Activated CD8-positive, alpha-beta memory T cell treated with anti-CD3 and anti-CD28 coated beads, Interleukin-2, amount 10 ng/mL, durations not matched to agents 7 days and 5 days (primary cell): ENCODE measurements at regions of chr17 and their contacts with region 1.

Region 1: GRCh38 chr17:3738562-3739295 is 15.0 kb downstream of the HASPIN start:
- DNase-seq: peak; percentile 80
- ATAC-seq: peak; percentile 63
- H3K4me3 Mint-ChIP-seq: no peak overlapping the region
- H3K27ac Mint-ChIP-seq: peak overlapping the region; percentile 34
- H3K4me1 Mint-ChIP-seq: peaks cover 58% of the 10 kb centered on the region
- H3K27me3 Mint-ChIP-seq: no peaks in the 10 kb centered on the region

Region 2: GRCh38 chr17:3610523-3610922 is 128.2 kb before region 1 on chr17:
- CTCF ChIA-PET with region 1: no interaction called
- DNase-seq: no peak
- ATAC-seq: no peak
- H3K4me3 Mint-ChIP-seq: no peak overlapping the region
- H3K27ac Mint-ChIP-seq: no peak overlapping the region
- H3K4me1 Mint-ChIP-seq: no peaks in the 10 kb centered on the region
- H3K27me3 Mint-ChIP-seq: no peaks in the 10 kb centered on the region

Region 3: DNA sequence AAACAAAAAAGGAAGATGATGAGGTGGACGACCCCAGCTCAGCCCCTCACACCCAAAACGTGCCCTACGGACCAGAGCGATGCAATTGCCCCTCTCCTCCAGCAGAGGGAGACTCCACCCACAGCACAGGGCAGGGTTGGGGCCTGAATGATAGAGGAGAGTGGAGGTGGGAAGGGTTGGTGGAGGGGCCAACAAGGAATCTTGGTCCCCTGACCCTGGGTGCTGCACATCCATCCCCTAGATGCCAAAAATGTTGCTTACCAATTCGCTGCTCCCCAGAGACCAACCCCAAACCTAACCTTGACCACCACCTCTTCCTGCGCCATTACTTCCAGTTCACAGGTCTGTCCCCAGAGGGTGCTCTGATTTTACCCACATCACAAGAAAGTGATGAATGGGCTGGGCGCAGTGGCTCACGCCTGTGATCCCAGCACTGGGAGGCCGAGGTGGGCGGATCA is 55.6 kb before region 1 on chr17:
- CTCF ChIA-PET with region 1: interaction called, 51 read pairs
- DNase-seq: peak; percentile 74
- ATAC-seq: peak; percentile 92
- H3K4me3 Mint-ChIP-seq: no peak overlapping the region
- H3K27ac Mint-ChIP-seq: no peak overlapping the region
- H3K4me1 Mint-ChIP-seq: peaks cover 11% of the 10 kb centered on the region
- H3K27me3 Mint-ChIP-seq: no peaks in the 10 kb centered on the region

Region 4: GRCh38 chr17:3723556-3724369 is 15.0 kb before region 1 on chr17 and contains the start of gene HASPIN:
- CTCF ChIA-PET with region 1: interaction called, 41 read pairs
- DNase-seq: peak; percentile 94
- ATAC-seq: peak; percentile 94
- H3K4me3 Mint-ChIP-seq: peak within 1 kb of the TSS; percentile 95
- H3K27ac Mint-ChIP-seq: peak within 1 kb of the TSS; percentile 89
- H3K4me1 Mint-ChIP-seq: peaks cover 63% of the 10 kb centered on the region
- H3K27me3 Mint-ChIP-seq: no peaks in the 10 kb centered on the region
- total RNA-seq, gene HASPIN: 30.4 to 31.2 TPM

Region 5: DNA sequence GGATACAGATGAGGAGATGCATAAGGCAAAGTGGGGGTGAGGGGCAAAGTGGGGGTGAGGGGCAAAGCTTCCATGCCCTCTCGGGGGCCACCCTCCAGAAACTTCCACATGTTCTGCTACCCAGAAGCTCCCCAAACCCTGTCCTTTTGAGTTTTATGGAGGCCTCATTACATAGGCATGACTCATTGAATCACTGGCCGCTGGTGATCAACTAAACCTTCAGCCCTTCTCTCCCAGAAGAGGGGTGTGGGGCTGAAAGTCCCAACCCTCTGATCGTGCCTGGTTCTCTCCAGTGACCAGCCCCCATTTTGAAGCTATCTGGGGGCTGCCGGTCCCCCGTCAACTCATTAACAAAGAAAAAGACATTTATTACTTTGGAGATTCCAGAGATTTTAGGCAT is 34.8 kb after region 1 on chr17:
- CTCF ChIA-PET with region 1: interaction called, 19 read pairs
- DNase-seq: no peak
- ATAC-seq: no peak
- H3K4me3 Mint-ChIP-seq: no peak overlapping the region
- H3K27ac Mint-ChIP-seq: peak overlapping the region; percentile 38
- H3K4me1 Mint-ChIP-seq: peaks cover 42% of the 10 kb centered on the region
- H3K27me3 Mint-ChIP-seq: no peaks in the 10 kb centered on the region

Region 6: GRCh38 chr17:3796110-3796821 is 57.5 kb after region 1 on chr17:
- CTCF ChIA-PET with region 1: interaction called, 31 read pairs
- DNase-seq: peak; percentile 99
- ATAC-seq: peak; percentile 64
- H3K4me3 Mint-ChIP-seq: peak overlapping the region; percentile 81
- H3K27ac Mint-ChIP-seq: peak overlapping the region; percentile 86
- H3K4me1 Mint-ChIP-seq: peaks cover 85% of the 10 kb centered on the region
- H3K27me3 Mint-ChIP-seq: peaks cover 6% of the 10 kb centered on the region

Region 7: GRCh38 chr17:3821101-3821500 is 82.4 kb after region 1 on chr17:
- CTCF ChIA-PET with region 1: interaction called, 283 read pairs
- DNase-seq: no peak
- ATAC-seq: no peak
- H3K4me3 Mint-ChIP-seq: no peak overlapping the region
- H3K27ac Mint-ChIP-seq: no peak overlapping the region
- H3K4me1 Mint-ChIP-seq: peaks cover 10% of the 10 kb centered on the region
- H3K27me3 Mint-ChIP-seq: no peaks in the 10 kb centered on the region

Region 8: DNA sequence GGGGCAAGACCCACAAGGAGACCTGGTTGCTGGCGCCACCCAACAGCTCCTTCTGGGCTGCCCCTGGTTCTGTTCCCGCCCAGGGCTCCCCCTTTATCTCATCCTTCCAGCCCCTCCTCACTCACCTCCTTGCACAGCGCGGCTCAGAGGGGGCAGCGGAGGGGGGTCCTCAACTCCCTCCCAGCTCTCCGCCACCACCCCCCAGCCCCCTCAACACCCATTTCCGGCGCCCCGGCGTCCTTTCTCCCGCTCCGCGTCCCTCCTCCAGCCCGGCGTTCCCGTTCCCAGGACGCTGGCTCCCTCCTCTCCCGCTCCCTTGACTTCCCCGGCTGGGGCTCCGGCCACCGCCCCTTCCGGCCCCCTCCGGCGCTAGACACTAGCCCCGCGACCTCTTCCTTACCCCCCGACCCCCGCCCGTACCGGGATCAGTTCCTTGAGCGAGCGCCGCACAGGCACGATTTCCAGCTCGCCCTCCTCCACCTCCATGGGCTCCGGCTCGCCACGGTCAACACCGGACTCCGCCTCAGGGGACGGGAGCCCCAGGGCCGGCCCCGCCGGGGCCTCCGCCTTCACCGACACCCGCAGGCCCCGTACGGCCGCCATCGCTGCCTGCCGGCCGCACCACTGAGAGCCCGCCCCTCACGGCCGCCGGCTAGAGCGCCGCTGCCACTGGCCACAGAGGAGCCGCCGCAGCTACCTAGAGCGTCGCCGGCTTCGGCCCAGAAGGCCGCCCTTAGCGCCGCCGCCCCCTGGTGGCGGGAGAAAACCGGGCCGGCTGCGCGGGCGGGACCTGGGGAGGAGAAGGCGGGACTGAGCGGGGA is 107.1 kb after region 1 on chr17 and contains the start of gene NCBP3:
- CTCF ChIA-PET with region 1: interaction called, 100 read pairs
- DNase-seq: peak; percentile 92
- ATAC-seq: peak; percentile 95
- H3K4me3 Mint-ChIP-seq: peak within 1 kb of the TSS; percentile 98
- H3K27ac Mint-ChIP-seq: peak within 1 kb of the TSS; percentile 94
- H3K4me1 Mint-ChIP-seq: peaks cover 25% of the 10 kb centered on the region
- H3K27me3 Mint-ChIP-seq: peaks cover 12% of the 10 kb centered on the region
- total RNA-seq, gene NCBP3: 46.3 to 48.7 TPM